ENCODE measurements at regions of chr16 and their contacts with region 1.

Region 1: DNA sequence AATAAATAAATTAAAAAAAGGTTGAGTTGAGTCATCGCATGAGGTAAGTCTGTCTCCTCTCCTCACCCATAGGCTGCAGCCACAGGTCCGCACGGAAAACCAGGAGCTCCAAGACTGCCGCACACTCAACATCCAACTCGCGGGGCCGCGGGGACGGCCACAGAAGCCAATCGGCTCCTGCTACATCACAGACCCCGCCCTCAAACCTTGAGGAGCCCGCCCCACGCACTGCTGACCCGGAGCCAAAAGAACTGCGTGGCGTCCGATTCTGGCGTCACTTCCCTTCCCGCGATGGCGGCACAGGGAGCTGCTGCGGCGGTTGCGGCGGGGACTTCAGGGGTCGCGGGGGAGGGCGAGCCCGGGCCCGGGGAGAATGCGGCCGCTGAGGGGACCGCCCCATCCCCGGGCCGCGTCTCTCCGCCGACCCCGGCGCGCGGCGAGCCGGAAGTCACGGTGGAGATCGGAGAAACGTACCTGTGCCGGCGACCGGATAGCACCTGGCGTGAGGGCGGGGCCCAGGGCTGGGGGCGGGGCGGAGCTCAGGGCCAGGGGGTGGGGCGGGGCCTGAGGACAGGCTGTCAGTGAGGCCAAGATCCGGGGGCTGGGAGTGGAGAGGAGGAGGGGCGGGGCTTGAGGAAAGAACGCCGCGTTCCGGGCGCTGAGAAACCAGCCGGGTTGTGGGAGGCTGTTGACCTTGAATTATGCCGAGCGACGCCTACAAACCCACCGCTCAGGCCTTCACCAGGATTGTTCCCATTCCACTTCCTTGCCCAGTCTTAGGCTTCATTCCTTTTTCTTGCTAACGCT is at the start of gene KAT8:
- DNase-seq: peak; percentile 95

Region 2: DNA sequence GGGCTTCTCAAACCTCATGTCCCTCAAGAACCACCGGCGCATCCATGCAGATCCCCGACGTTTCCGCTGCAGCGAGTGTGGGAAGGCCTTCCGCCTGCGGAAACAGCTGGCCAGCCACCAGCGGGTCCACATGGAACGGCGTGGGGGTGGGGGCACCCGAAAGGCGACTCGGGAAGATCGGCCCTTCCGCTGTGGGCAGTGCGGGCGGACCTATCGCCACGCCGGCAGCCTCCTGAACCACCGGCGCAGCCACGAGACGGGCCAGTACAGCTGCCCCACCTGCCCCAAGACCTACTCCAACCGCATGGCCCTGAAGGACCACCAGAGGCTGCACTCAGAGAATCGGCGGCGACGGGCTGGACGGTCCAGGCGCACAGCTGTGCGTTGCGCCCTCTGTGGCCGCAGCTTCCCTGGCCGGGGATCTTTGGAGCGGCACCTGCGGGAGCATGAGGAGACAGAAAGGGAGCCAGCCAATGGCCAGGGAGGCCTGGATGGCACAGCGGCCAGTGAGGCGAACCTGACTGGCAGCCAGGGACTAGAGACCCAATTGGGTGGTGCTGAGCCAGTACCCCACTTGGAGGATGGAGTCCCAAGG is 37.5 kb before region 1 on chr16:
- CTCF ChIA-PET with region 1: no interaction called
- POLR2A ChIA-PET with region 1: no interaction called
- DNase-seq: no peak

Region 3: GRCh38 chr16:31094424-31095120 is 23.0 kb before region 1 on chr16 and contains the start of gene VKORC1:
- CTCF ChIA-PET with region 1: interaction called, 3 read pairs
- POLR2A ChIA-PET with region 1: interaction called, 17 read pairs
- DNase-seq: peak; percentile 90

Region 4: GRCh38 chr16:31128711-31129567 is 11.3 kb after region 1 on chr16:
- CTCF ChIA-PET with region 1: no interaction called
- POLR2A ChIA-PET with region 1: interaction called, 38 read pairs
- DNase-seq: no peak

Region 5: DNA sequence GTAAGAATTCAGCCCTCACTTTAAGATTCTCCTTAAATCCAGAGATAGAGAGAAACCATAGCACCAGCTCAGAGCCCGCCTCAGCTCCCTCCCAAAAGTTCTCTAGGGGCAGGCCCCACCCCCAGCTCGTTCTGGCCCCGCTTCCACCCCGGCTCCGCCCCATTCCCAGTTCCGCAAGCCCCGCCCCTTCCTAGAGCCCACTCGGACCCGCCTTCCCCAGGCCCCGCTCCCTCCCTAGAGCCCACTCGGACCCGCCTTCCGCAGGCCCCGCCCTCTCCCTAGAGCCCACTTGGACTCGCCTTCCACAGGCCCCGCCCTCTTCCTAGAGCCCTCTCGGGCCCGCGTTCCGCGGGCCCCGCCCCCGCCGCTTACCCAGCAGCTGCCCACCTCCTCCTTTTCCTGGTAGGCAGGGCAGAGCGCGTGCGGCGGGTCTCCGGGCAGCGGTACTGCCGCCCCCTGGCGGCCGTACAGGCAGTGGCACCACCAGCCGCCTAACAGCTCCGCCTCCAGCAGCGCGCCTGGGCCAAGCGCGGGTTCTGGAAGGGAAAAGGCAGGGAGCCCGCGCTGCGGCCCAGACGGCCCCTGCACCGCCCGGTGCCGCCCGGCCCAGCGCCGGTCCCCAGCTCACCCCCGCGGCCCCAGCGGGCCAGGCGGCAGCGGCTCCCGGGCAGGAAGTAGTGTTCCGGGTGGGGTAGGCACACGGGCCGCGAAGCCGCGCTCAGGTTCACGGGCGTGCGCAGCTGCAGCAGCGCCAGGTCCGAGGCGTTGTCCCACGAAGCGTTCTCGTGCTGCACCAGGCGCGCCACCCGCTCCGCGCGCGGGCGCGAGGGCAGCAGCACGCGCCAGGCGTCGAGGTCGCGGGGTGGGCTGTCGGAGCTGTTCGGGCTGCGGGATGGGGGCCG is 24.8 kb after region 1 on chr16:
- CTCF ChIA-PET with region 1: interaction called, 5 read pairs
- POLR2A ChIA-PET with region 1: interaction called, 38 read pairs
- DNase-seq: peak; percentile 100

Measured in HEK293T (cell line).